ENCODE measurements at regions of chr7 and their contacts with region 1.

Region 1: DNA sequence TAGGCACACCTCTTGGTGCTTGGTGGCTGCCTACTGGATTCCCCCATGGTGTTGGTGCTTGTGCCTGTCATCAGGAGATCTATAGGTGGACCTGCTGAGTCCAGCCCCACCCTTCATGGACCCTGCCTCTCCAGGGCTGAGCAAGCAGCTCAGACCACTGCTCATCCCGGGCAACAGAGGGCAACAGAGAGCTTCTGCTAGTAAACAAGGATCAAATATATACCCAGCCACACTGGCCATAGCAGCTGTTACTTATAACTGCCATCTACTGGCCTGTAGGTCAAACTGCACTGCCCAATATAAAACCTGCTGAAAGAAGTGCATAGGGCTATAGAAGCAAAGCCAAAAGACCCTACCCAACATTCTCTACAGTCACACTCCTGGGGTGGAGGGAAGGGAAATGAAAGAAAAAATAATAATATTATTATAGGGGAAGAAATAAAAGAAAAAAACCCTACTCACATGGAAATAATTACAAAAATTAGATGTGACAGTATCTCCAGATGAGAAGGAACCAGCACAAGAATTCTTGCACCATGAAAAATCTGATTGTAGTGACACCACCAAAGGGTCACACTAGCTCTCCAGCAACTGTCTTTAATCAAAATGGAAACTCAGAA is 54.9 kb upstream of the ZNF800 start:
- DNase-seq: peak; percentile 44
- H3K4me3 ChIP-seq: no peak overlapping the region
- H3K27ac ChIP-seq: no peak overlapping the region
- H3K4me1 ChIP-seq: no peaks in the 10 kb centered on the region
- H3K27me3 ChIP-seq: no peaks in the 10 kb centered on the region
- CTCF ChIP-seq: peak; percentile 56 to 60

Region 2: GRCh38 chr7:126803060-126803665 is 644.3 kb before region 1 on chr7:
- CTCF ChIA-PET with region 1: no interaction called
- dilution Hi-C with region 1: no loop called
- in situ Hi-C with region 1: no loop called
- intact Hi-C with region 1: loop called (anchors 5 kb)
- DNase-seq: peak; percentile 59
- H3K4me3 ChIP-seq: no peak overlapping the region
- H3K27ac ChIP-seq: no peak overlapping the region
- H3K4me1 ChIP-seq: peaks cover 3% of the 10 kb centered on the region
- H3K27me3 ChIP-seq: no peaks in the 10 kb centered on the region
- CTCF ChIP-seq: peak; percentile 53 to 80

Region 3: GRCh38 chr7:127347567-127348246 is 99.7 kb before region 1 on chr7:
- CTCF ChIA-PET with region 1: interaction called, 3 read pairs
- dilution Hi-C with region 1: no loop called
- in situ Hi-C with region 1: no loop called
- intact Hi-C with region 1: loop called (anchors 1 kb)
- DNase-seq: peak; percentile 51
- H3K4me3 ChIP-seq: peak overlapping the region in 2 of 3 experiments; percentile 44 to 49
- H3K27ac ChIP-seq: no peak overlapping the region
- H3K4me1 ChIP-seq: peaks cover 8% of the 10 kb centered on the region
- H3K27me3 ChIP-seq: no peaks in the 10 kb centered on the region
- CTCF ChIP-seq: peak; percentile 37 to 47

Region 4: GRCh38 chr7:127514499-127514898 is 67.1 kb after region 1 on chr7:
- CTCF ChIA-PET with region 1: no interaction called
- dilution Hi-C with region 1: no loop called
- in situ Hi-C with region 1: no loop called
- intact Hi-C with region 1: no loop called
- DNase-seq: peak; percentile 11
- H3K4me3 ChIP-seq: no peak overlapping the region
- H3K27ac ChIP-seq: no peak overlapping the region
- H3K4me1 ChIP-seq: no peaks in the 10 kb centered on the region
- H3K27me3 ChIP-seq: no peaks in the 10 kb centered on the region
- CTCF ChIP-seq: peak; percentile 22 to 60

Region 5: GRCh38 chr7:127550247-127550646 is 102.8 kb after region 1 on chr7:
- CTCF ChIA-PET with region 1: no interaction called
- dilution Hi-C with region 1: no loop called
- in situ Hi-C with region 1: no loop called
- intact Hi-C with region 1: no loop called
- DNase-seq: no peak
- H3K4me3 ChIP-seq: no peak overlapping the region
- H3K27ac ChIP-seq: no peak overlapping the region
- H3K4me1 ChIP-seq: no peaks in the 10 kb centered on the region
- H3K27me3 ChIP-seq: no peaks in the 10 kb centered on the region
- CTCF ChIP-seq: peak; percentile 8 to 26